Mammary epithelial cell (primary cell): ENCODE measurements at regions of chr5 and their contacts with region 1.

Region 1: GRCh38 chr5:40736103-40736875 is 19.5 kb downstream of the TTC33 start:
- DNase-seq: peak; percentile 55
- H3K4me3 ChIP-seq: no peak overlapping the region
- H3K27ac ChIP-seq: no peak overlapping the region
- H3K4me1 ChIP-seq: peaks cover 10% of the 10 kb centered on the region
- H3K27me3 ChIP-seq: no peaks in the 10 kb centered on the region
- CTCF ChIP-seq: peak; percentile 69 to 74

Region 2: DNA sequence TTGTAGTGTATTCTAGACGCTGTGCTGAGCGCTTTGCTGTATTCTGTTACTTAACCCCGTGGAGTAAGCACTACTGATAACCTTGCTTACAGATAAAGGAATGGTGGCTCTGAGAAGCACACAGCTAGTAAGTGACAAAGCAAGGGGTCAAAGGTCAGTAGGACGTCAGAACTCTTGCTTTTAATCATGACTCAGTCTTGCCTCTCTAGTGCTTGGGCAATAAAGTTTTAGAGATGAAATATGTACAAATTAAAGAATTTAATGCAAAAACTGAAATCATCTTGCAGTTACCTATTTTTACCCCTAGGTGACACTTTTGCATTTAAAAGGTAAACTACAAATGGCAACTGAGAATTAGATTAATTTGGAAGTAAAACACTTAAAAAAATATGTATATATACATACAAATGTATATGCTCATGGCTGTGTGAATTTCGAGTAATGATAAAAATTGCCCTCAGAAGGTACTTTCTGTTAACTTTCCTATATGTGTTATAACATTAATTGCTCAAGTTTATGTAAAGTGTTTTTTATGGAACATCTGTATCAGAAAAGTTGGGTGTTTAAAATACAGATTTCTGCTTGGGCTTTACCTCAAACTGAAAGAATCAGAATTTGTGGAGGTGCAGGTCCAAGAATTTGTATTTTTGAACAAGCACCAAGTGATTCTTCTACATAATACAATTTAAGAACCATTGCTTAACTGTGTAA is 1136.4 kb before region 1 on chr5:
- CTCF ChIA-PET with region 1: no interaction called
- dilution Hi-C with region 1: no loop called
- in situ Hi-C with region 1: no loop called
- intact Hi-C with region 1: loop called (anchors 10 kb)
- DNase-seq: peak; percentile 42
- H3K4me3 ChIP-seq: no peak overlapping the region
- H3K27ac ChIP-seq: no peak overlapping the region
- H3K4me1 ChIP-seq: no peaks in the 10 kb centered on the region
- H3K27me3 ChIP-seq: no peaks in the 10 kb centered on the region
- CTCF ChIP-seq: peak; percentile 67 to 72

Region 3: GRCh38 chr5:39714036-39714698 is 1022.1 kb before region 1 on chr5:
- CTCF ChIA-PET with region 1: no interaction called
- dilution Hi-C with region 1: no loop called
- in situ Hi-C with region 1: loop called in 1 of 2 experiments (anchors 10 kb)
- intact Hi-C with region 1: loop called (anchors 2 kb)
- DNase-seq: peak; percentile 64
- H3K4me3 ChIP-seq: no peak overlapping the region
- H3K27ac ChIP-seq: no peak overlapping the region
- H3K4me1 ChIP-seq: no peaks in the 10 kb centered on the region
- H3K27me3 ChIP-seq: peaks cover under 1% of the 10 kb centered on the region
- CTCF ChIP-seq: peak; percentile 76 to 83

Region 4: DNA sequence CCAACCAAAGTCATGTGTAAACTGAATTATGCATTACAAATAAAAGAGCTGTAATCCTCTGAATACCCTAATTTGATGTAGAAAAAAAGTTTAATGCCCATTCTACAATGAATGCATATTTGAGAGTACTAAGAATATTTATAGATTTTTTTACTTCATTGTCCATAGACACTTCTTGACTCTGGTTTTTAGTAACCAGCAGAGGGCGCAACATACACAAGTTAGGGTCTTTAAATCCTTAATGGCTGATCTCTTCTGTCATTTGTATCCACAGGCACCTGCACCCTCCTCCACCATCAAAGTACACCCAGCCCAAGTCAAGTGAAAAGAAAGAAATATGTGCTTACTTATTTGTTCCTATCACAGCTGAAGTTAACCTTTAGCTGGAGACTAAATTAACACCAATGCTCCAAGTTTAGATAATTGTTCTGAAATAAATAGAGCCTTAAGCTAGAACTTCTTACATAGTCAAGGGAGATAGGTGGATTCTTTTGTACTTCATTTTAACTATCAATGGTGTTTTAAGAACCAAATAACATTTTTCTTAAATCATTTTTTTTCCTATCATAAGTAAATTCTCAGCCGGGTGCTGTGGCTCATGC is 787.3 kb before region 1 on chr5:
- CTCF ChIA-PET with region 1: no interaction called
- dilution Hi-C with region 1: no loop called
- in situ Hi-C with region 1: no loop called
- intact Hi-C with region 1: loop called (anchors 1 kb)
- DNase-seq: peak; percentile 50
- H3K4me3 ChIP-seq: no peak overlapping the region
- H3K27ac ChIP-seq: no peak overlapping the region
- H3K4me1 ChIP-seq: no peaks in the 10 kb centered on the region
- H3K27me3 ChIP-seq: no peaks in the 10 kb centered on the region
- CTCF ChIP-seq: peak; percentile 62 to 67

Region 5: GRCh38 chr5:40165794-40166728 is 570.2 kb before region 1 on chr5:
- CTCF ChIA-PET with region 1: no interaction called
- dilution Hi-C with region 1: no loop called
- in situ Hi-C with region 1: no loop called
- intact Hi-C with region 1: loop called (anchors 5 kb)
- DNase-seq: peak; percentile 10
- H3K4me3 ChIP-seq: no peak overlapping the region
- H3K27ac ChIP-seq: no peak overlapping the region
- H3K4me1 ChIP-seq: no peaks in the 10 kb centered on the region
- H3K27me3 ChIP-seq: no peaks in the 10 kb centered on the region
- CTCF ChIP-seq: peak; percentile 10 to 46

Region 6: GRCh38 chr5:40367255-40367654 is 369.0 kb before region 1 on chr5:
- CTCF ChIA-PET with region 1: no interaction called
- dilution Hi-C with region 1: no loop called
- in situ Hi-C with region 1: no loop called
- intact Hi-C with region 1: loop called (anchors 5 kb)
- DNase-seq: no peak
- H3K4me3 ChIP-seq: no peak overlapping the region
- H3K27ac ChIP-seq: no peak overlapping the region
- H3K4me1 ChIP-seq: no peaks in the 10 kb centered on the region
- H3K27me3 ChIP-seq: no peaks in the 10 kb centered on the region
- CTCF ChIP-seq: peak in 1 of 2 donors; percentile 37

Region 7: GRCh38 chr5:40383749-40384651 is 352.3 kb before region 1 on chr5:
- CTCF ChIA-PET with region 1: no interaction called
- dilution Hi-C with region 1: no loop called
- in situ Hi-C with region 1: no loop called
- intact Hi-C with region 1: no loop called
- DNase-seq: peak; percentile 69
- H3K4me3 ChIP-seq: no peak overlapping the region
- H3K27ac ChIP-seq: peak overlapping the region; percentile 70
- H3K4me1 ChIP-seq: peaks cover 56% of the 10 kb centered on the region
- H3K27me3 ChIP-seq: no peaks in the 10 kb centered on the region
- CTCF ChIP-seq: no peak

Region 8: GRCh38 chr5:40502736-40503135 is 233.6 kb before region 1 on chr5:
- CTCF ChIA-PET with region 1: no interaction called
- dilution Hi-C with region 1: no loop called
- in situ Hi-C with region 1: no loop called
- intact Hi-C with region 1: loop called (anchors 5 kb)
- DNase-seq: no peak
- H3K4me3 ChIP-seq: no peak overlapping the region
- H3K27ac ChIP-seq: no peak overlapping the region
- H3K4me1 ChIP-seq: no peaks in the 10 kb centered on the region
- H3K27me3 ChIP-seq: no peaks in the 10 kb centered on the region
- CTCF ChIP-seq: no peak

Region 9: DNA sequence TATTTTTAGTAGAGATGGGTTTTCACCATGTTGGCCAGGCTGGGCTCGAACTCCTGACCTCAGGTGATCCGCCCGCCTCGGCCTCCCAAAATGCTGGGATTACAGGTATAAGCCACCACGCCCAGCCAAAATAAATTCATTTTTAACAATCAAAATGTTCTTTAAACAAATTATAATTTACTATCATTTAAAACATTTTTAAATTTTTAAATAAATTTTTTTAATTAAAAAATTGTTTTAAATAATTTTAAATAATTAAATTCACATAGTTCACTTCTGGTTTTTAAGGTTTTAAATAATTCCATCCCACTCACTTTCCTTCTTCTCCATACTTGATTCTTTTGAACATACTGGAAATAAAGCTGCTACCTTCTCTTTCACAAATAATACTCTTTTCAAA is 34.5 kb after region 1 on chr5:
- CTCF ChIA-PET with region 1: no interaction called
- dilution Hi-C with region 1: no loop called
- in situ Hi-C with region 1: no loop called
- intact Hi-C with region 1: no loop called
- DNase-seq: no peak
- H3K4me3 ChIP-seq: no peak overlapping the region
- H3K27ac ChIP-seq: no peak overlapping the region
- H3K4me1 ChIP-seq: peaks cover under 1% of the 10 kb centered on the region
- H3K27me3 ChIP-seq: no peaks in the 10 kb centered on the region
- CTCF ChIP-seq: no peak